HEK293 (cell line): ENCODE measurements at regions of chr2 and their contacts with region 1.

Region 1: DNA sequence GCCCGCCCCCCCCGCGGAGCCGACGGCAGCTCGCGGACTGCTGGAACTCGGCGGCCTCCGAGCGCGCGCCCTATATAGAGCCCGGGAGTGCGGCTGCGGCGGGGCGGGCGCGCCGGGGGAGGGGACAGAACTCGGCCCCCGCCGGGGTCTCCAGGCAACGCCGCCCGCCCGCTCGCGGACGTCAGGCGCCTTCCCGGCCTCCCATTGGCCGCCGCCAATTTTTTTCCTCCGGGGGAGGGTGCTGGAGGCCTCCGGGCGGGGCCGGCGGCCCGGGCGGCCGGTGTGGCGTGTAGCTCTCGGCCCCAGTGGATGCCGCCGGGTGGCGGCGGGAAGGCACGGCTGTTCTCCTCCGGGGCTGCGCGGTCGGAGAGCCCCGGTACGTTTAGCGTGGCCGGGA is at the start of gene ZFP36L2:
- H3K4me3 ChIP-seq: peak within 1 kb of the TSS; percentile 85
- H3K27ac ChIP-seq: peak within 1 kb of the TSS; percentile 97
- H3K4me1 ChIP-seq: no peaks in the 10 kb centered on the region; the same call in 1 of the 2 replicates
- CTCF ChIP-seq: no peak

Region 2: GRCh38 chr2:42367835-42368234 is 858.7 kb before region 1 on chr2:
- CTCF ChIA-PET with region 1: no interaction called
- POLR2A ChIA-PET with region 1: no interaction called
- H3K4me3 ChIP-seq: no peak overlapping the region
- H3K27ac ChIP-seq: no peak overlapping the region
- H3K4me1 ChIP-seq: peaks cover 12% of the 10 kb centered on the region
- CTCF ChIP-seq: no peak

Region 3: DNA sequence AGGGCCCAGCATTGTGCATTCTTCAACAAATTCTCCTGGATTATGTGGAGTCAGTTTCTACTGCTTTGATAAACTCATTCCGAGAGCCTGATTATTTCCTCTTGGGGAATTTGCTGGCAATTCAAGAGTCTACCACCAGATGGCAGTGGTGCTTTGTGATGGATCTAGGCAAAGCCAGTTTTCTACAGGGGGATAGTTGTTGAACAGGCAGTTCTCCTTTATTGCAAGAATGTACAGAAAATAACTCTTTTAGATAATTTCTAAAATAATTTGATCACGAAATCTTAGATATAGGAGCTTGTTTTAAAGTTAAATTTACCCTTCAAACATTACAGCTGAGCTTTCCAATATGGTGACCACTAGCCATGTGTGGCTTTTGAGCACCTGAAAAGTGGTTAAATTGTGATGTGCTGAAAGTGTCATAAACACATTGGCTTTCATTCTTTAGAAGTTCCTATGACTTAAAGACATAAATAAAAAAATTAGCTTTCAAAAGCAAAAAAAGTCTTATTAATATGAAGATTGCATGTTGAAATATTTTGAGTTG is 367.5 kb before region 1 on chr2:
- CTCF ChIA-PET with region 1: interaction called, 17 read pairs
- POLR2A ChIA-PET with region 1: no interaction called
- H3K4me3 ChIP-seq: no peak overlapping the region
- H3K27ac ChIP-seq: no peak overlapping the region
- H3K4me1 ChIP-seq: no peaks in the 10 kb centered on the region
- CTCF ChIP-seq: peak; percentile 61

Region 4: GRCh38 chr2:43024515-43025011 is 202.0 kb before region 1 on chr2:
- CTCF ChIA-PET with region 1: interaction called, 35 read pairs
- POLR2A ChIA-PET with region 1: interaction called, 5 read pairs
- H3K4me3 ChIP-seq: no peak overlapping the region
- H3K27ac ChIP-seq: no peak overlapping the region
- H3K4me1 ChIP-seq: no peaks in the 10 kb centered on the region
- CTCF ChIP-seq: peak; percentile 51; the same call in 1 of the 2 replicates

Region 5: DNA sequence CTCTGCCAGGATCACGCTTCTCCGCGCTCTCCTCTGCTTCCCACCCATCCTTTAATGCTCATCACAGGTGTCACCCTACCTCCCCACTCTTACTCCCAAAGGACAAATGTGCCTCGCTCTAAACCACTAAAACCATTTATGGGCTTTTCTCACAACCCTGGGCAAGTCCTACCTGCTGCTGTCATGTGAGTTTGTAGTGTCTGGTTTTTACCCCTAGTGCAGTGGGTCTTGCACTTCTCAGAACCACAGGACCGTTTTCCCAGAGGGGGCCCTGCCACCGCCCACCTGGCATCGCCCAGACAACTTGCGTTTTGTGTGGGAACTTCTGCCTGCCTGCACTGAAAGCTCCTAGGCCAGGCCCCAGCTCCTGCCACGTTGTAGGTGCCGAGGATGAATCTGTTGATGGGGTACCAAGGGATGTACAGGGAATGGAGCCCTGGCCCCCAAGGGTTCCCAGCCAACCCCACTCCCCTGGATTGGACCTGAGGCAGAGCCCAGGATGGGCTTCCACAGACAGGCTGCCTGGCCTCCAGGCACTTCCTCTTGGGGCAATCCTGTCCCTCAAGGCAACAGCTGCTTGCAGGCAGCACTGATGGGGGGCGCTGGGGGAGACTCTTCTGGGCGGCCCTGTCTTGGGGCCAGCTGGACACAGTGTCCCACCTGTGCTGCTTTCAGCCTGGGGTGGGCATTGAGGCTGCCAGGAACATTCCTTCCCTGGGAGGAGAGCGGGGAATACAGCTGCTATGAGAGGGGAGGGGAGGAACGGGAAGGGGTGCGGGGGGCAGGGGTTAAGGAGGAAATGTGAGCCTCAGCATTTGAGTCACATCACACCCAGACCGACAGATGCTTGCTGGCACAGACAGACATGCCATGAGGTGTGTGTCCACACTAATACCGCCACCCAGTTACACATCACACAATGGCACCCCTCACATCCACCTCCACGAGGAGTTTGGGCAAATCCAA is 176.4 kb before region 1 on chr2:
- CTCF ChIA-PET with region 1: no interaction called
- POLR2A ChIA-PET with region 1: no interaction called
- H3K4me3 ChIP-seq: no peak overlapping the region
- H3K27ac ChIP-seq: no peak overlapping the region
- H3K4me1 ChIP-seq: no peaks in the 10 kb centered on the region
- CTCF ChIP-seq: no peak

Region 6: DNA sequence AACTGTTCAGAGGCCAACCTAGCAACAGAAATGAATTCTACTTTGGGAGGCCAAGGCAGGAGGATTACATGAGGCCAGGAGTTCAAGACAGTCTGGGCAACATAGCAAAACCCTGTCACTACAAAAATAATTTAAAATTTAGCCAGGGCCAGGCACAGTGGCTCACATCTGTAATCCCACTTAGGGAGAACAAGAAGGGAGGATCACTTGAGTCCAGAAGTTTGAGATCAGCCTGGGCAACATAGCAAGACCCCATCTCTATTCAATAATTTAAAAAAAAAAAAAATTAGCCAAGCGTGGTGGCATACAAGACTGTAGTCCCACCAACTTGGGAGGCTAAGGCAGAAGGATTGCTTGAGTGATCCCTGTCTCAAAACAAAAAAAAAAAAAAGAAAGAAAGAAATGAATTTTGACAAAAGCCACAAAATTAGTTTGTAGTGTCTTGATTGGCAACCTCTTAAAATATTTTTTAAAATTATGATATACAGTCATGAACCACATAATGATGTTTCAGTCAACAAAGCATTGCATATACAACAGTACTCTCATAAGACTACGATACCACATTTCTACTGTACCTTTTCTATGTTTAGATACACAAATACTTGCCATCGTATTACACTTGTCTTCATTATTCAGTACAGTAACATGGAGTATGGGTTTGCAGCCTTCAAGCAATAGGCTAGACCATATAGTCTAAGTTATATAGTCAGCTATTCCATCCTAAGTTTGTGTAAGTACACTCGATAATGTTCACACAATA is 130.8 kb before region 1 on chr2:
- CTCF ChIA-PET with region 1: no interaction called
- POLR2A ChIA-PET with region 1: no interaction called
- H3K4me3 ChIP-seq: no peak overlapping the region
- H3K27ac ChIP-seq: no peak overlapping the region
- H3K4me1 ChIP-seq: no peaks in the 10 kb centered on the region
- CTCF ChIP-seq: no peak

Region 7: GRCh38 chr2:43169987-43170386 is 56.6 kb before region 1 on chr2:
- CTCF ChIA-PET with region 1: interaction called, 17 read pairs
- POLR2A ChIA-PET with region 1: interaction called, 9 read pairs
- H3K4me3 ChIP-seq: no peak overlapping the region
- H3K27ac ChIP-seq: no peak overlapping the region
- H3K4me1 ChIP-seq: peaks cover 3% of the 10 kb centered on the region; the same call in 1 of the 2 replicates
- CTCF ChIP-seq: no peak; the same call in 1 of the 2 replicates

Region 8: GRCh38 chr2:43238176-43238575 is 11.6 kb after region 1 on chr2:
- CTCF ChIA-PET with region 1: interaction called, 11 read pairs
- POLR2A ChIA-PET with region 1: no interaction called
- H3K4me3 ChIP-seq: no peak overlapping the region
- H3K27ac ChIP-seq: no peak overlapping the region
- H3K4me1 ChIP-seq: no peaks in the 10 kb centered on the region
- CTCF ChIP-seq: no peak

Region 9: GRCh38 chr2:43402452-43402944 is 175.9 kb after region 1 on chr2:
- CTCF ChIA-PET with region 1: no interaction called
- POLR2A ChIA-PET with region 1: no interaction called
- H3K4me3 ChIP-seq: no peak overlapping the region
- H3K27ac ChIP-seq: no peak overlapping the region
- H3K4me1 ChIP-seq: no peaks in the 10 kb centered on the region; the same call in 1 of the 2 replicates
- CTCF ChIP-seq: no peak